Psoas muscle (tissue), 8 donors: ENCODE measurements at regions of chr11 and their contacts with region 1.

Region 1: GRCh38 chr11:100930185-100930778 is 199.3 kb downstream of the PGR start:
- DNase-seq: no peak
- ATAC-seq: peak in 1 of 4 donors; percentile 69
- H3K4me3 ChIP-seq: no peak overlapping the region
- H3K27ac ChIP-seq: no peak overlapping the region
- H3K4me1 ChIP-seq: no peaks in the 10 kb centered on the region
- H3K27me3 ChIP-seq: no peaks in the 10 kb centered on the region
- CTCF ChIP-seq: peak; percentile 71

Region 2: GRCh38 chr11:100639140-100639539 is 291.1 kb before region 1 on chr11:
- intact Hi-C with region 1: no loop called
- DNase-seq: no peak
- ATAC-seq: no peak
- H3K4me3 ChIP-seq: no peak overlapping the region
- H3K27ac ChIP-seq: no peak overlapping the region
- H3K4me1 ChIP-seq: peaks cover 3% of the 10 kb centered on the region
- H3K27me3 ChIP-seq: no peaks in the 10 kb centered on the region
- CTCF ChIP-seq: no peak

Region 3: GRCh38 chr11:100681064-100681502 is 249.2 kb before region 1 on chr11:
- intact Hi-C with region 1: loop called in 1 of 2 experiments (anchors 5 kb)
- DNase-seq: peak; percentile 66 to 76
- ATAC-seq: peak; percentile 50 to 62 (median 56)
- H3K4me3 ChIP-seq: no peak overlapping the region
- H3K27ac ChIP-seq: no peak overlapping the region
- H3K4me1 ChIP-seq: no peaks in the 10 kb centered on the region
- H3K27me3 ChIP-seq: no peaks in the 10 kb centered on the region
- CTCF ChIP-seq: no peak

Region 4: DNA sequence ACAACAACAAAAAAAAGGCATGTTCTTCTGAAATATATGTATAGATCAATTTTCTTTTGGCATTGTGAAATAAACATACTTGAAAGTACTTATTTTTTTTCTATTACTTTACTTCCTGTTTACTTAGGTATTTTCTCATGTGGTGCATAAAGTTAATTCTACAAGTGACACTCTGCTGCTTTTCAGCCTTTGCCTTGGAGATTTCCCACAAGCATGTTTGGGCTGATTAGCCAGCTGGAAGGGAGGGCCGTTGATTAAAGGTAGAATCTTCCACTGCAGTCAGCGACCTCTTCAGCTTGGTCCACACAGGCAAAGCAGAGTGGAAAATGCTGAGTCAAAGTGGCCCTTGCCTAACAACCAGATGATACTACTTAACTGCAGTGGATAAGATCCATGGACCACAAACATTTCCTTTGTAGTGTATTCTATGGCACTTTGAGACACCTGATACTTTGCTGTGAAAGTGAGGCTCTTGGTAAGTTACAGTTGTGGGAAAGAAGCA is 67.2 kb before region 1 on chr11:
- intact Hi-C with region 1: loop called in 1 of 2 experiments (anchors 10 kb)
- DNase-seq: peak in 1 of 2 donors; percentile 15
- ATAC-seq: peak; percentile 61 to 82 (median 72)
- H3K4me3 ChIP-seq: no peak overlapping the region
- H3K27ac ChIP-seq: peak overlapping the region; percentile 41
- H3K4me1 ChIP-seq: no peaks in the 10 kb centered on the region
- H3K27me3 ChIP-seq: no peaks in the 10 kb centered on the region
- CTCF ChIP-seq: no peak

Region 5: DNA sequence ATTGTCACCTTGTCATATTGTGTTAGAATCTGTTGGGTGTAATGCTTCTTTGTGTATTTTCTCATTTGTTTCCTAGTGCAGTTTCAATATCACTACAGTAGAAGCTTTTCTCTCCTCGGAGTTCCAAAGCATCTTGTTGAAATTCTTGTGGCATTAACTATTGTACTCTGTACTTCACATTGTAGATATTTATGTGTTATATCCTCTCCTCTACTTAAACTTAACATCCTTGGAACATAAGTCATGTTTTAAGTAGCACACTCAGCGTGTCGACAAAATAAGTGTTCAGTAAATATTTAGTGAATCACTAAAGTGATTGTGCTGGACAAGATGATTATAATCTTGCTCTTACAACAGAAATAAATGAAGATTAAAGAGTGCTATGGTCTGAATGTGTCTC is 41.4 kb before region 1 on chr11:
- intact Hi-C with region 1: no loop called
- DNase-seq: no peak
- ATAC-seq: no peak
- H3K4me3 ChIP-seq: no peak overlapping the region
- H3K27ac ChIP-seq: no peak overlapping the region
- H3K4me1 ChIP-seq: no peaks in the 10 kb centered on the region
- H3K27me3 ChIP-seq: no peaks in the 10 kb centered on the region
- CTCF ChIP-seq: no peak